ENCODE measurements at regions of chr12 and their contacts with region 1.

Region 1: DNA sequence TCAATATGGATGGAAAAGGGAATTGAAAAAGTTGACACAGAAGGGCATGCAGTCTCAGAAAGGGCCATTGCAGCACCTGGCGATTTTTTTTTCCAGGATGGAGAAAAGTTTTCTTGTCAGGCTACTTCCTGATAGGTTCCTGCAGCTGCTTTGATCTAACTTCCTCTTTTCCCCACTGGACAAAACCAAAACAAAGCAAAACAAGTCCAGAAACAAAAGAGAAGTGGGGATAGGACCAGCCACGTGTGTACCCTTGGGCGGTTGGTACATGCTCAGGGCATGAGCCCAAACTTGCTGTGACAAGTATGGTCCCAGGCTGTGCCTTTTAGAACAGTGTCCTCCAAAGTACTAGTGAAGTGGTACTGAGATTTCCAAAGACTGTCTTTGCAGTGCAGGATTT is 89.8 kb downstream of the CHST11 start:
- DNase-seq: no peak

Region 2: DNA sequence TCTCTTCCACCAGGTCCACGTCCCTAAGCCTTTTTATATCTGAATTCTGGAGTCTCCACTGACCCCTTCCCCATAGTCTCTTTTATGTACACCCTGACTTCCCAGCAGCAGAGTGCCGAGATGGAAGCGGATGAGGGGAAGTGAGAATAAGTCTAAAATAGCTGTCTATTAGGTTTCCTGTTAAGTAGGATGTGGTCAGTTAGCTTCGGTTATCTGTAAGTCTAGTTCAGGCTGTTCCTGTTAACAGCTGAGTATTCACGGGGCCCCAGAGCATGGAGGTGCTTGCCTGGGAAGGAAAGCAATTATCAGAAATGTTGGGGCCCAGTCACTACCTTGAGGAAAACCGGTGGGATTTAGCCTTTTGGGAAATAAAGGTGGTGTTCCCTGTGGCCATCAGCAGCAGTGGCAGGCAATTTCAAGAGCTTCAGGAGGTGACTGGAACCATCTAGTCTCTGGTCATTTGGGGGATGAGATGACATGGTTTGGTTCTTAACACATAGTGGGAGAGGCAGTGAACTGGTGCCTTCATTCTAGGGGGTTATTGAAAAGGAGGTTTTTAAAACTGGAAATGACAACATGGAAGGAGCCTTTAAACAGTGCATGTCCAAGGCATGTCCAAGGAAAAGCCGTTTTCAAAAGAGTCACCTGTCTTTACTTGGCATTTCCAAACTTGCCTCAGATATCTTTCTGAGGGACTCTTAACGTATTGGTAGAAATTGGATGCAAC is 68.0 kb before region 1 on chr12:
- intact Hi-C with region 1: no loop called
- DNase-seq: no peak

Region 3: DNA sequence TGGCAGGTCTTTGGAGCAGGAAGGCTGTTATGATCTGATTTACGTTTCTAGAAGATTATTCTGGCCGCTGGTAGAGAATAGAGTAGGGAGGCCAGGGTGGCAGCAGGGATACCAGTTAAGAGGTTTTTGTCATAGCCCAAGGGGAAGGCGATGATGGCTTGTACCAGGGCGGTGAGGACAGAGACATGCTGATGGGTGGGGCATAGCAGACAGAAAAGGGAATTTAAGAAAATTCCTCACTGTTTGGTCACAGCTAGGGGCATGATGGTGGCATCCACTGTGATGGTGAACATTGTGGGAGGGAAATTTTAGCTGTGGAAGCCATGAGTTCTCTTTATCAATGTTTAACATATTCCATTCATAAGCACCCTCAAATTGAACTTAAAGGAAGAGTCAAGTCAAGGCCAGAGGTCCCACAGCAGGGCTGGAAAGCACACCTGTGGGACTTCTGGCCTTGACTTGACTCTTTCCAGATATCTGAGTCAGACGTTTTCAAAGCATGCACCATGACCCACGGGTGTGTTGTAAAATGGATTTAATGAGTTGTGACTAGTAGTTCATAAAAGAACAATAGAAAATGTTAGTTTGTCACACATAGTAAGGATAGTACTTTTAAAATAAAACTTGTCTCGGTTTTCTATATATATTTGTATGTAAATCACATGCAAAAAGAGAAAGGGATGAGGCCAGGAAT is 44.8 kb after region 1 on chr12:
- intact Hi-C with region 1: loop called (anchors 5 kb)
- DNase-seq: no peak

Region 4: DNA sequence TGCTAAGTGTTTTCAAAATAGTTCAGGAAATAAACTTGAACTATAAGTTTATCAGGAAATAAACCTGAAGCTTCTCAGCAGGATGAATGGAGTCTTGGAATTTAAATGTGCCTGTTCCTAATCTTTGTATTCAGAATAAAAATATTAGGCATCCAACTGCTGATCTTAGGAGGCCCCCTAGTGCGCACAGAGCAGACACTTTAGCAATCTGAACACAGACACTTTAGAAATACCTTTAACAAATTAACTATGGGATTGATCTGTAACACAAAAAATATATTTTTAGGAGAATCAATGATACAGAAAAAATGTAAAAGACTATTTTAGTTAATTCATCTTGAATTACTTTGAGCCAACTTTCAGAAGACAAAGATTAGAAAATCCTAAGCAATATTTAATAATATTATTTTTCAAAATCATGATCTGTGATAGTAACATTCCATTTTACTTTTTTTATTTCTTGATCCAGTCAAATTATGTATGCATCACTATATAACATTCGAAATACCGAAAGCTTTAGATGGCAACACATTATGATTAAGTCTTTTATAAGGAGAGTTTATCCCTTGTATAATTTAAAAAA is 330.6 kb after region 1 on chr12:
- intact Hi-C with region 1: no loop called
- DNase-seq: no peak